ENCODE measurements at regions of chr2 and their contacts with region 1.

Region 1: DNA sequence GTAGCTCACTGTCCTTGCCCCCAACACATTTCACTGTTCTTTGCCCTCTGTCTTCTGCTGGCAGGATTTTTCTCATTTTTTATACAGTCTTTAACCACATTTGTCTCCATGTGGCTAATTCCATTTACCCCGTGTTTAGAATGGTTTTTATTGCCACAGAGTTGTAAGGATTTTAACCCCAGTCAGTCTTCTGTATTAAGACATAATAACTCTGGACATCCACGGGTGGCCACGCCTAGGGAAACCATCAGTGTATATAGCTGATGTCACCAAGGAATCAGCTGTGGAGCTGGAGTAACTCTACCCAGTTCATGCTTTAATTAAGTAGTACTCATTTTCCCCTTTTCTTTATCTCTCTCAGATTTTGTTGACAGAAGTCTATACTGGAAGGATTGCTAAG is 139.8 kb downstream of the MAP4K4 start:
- DNase-seq: no peak
- H3K4me3 ChIP-seq: no peak overlapping the region
- H3K27ac ChIP-seq: no peak overlapping the region
- H3K4me1 ChIP-seq: no peaks in the 10 kb centered on the region
- H3K27me3 ChIP-seq: no peaks in the 10 kb centered on the region
- CTCF ChIP-seq: no peak
- POLR2A ChIP-seq: no peak

Region 2: DNA sequence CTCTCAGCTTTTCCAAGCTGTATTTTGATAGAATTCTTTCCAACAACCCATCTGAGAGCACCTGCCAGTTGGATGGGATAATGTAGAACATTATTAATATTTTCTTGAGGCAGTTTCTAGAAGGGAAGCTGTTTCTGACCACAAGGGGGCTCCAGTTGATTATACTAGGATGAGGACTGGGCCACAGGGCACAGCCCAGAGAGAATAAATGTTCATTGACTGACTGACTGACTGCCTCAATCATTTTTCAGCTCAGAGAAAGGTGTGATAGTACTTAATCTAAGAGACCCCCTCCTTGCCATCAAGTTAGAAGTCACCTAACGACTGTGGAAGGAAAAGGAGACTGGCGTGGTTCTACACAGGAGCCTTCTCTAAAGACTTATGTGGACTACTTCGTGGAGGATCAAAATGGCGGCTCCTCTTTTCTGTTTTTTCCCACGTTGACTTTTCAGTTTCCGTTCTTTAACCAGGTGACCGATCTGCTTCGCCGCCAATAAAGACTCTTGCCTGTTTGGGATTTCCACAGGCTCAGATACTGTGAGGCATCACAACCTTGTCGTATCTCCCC is 418.2 kb before region 1 on chr2:
- intact Hi-C with region 1: loop called (anchors 5 kb)
- DNase-seq: peak; percentile 86
- H3K4me3 ChIP-seq: peak overlapping the region; percentile 17 to 36
- H3K27ac ChIP-seq: no peak overlapping the region
- H3K4me1 ChIP-seq: no peaks in the 10 kb centered on the region
- H3K27me3 ChIP-seq: no peaks in the 10 kb centered on the region
- CTCF ChIP-seq: peak; percentile 57 to 69 (median 67)
- POLR2A ChIP-seq: no peak

Measured in testis (tissue), 5 donors.